ENCODE measurements at regions of chr11 and their contacts with region 1.

Region 1: DNA sequence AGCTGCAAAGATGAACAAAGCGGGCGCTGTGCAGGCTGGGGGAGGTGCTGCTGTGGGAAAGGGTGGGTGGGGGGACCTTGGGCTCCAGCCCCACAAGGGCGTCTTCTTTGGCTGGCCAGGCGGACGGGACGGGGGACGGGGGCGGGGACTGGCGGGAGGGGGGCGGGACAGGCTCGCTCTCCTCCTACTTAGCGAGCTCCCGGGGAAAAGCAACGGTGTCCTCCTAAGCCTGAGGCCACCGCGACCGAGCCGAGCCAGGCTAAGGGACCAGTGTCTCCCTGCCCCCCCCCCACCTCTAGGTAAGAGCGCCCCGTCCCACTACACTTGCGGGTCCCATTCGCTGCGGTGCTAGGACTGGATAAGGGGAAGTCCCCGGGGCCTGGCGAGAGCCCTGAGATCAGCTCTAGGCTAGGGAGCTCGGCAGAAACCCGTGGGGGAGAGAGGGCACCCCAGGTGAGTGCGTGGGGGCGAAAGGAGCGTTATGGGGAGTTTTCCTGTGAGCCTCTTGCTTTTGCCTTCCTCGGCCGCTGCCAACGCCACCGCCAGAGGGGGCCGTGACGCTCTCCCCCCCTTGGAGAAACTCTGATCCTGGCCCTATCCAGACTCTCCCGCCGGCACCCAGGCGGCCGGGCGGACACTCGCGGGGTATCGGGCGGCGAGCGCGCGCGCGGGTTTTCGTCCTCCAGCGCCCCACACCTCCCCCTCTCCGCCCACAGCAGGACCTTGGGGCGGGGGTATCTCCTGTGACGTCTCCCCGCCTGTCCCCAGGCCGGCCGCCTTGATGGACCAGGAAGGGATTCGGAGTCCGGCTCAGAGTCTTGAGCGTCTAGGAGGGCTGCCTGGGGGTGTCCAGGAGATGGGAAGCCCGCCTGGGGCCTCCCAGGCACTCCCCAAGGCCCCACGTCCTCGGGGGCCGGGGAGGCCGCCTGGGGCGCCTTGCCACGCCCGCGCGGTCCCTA is at the start of gene PHLDB1:
- DNase-seq: peak; percentile 81 to 86 (median 83)
- ATAC-seq: peak; percentile 12 to 54 (median 49)
- H3K4me3 ChIP-seq: peak within 1 kb of the TSS; percentile 63 to 99 (median 82)
- H3K27ac ChIP-seq: peak within 1 kb of the TSS; percentile 86 to 100 (median 95)
- H3K4me1 ChIP-seq: peaks cover 0 to 76% (median 45%) of the 10 kb centered on the region in 12 donors
- H3K27me3 ChIP-seq: peaks cover 0 to 18% (median 0%) of the 10 kb centered on the region in 9 donors
- CTCF ChIP-seq: peak; percentile 37 to 67 (median 52)
- POLR2A ChIP-seq: peak in 1 of 2 donors; percentile 68
- total RNA-seq, gene PHLDB1: 86.0 to 124 (median 113) TPM

Region 2: DNA sequence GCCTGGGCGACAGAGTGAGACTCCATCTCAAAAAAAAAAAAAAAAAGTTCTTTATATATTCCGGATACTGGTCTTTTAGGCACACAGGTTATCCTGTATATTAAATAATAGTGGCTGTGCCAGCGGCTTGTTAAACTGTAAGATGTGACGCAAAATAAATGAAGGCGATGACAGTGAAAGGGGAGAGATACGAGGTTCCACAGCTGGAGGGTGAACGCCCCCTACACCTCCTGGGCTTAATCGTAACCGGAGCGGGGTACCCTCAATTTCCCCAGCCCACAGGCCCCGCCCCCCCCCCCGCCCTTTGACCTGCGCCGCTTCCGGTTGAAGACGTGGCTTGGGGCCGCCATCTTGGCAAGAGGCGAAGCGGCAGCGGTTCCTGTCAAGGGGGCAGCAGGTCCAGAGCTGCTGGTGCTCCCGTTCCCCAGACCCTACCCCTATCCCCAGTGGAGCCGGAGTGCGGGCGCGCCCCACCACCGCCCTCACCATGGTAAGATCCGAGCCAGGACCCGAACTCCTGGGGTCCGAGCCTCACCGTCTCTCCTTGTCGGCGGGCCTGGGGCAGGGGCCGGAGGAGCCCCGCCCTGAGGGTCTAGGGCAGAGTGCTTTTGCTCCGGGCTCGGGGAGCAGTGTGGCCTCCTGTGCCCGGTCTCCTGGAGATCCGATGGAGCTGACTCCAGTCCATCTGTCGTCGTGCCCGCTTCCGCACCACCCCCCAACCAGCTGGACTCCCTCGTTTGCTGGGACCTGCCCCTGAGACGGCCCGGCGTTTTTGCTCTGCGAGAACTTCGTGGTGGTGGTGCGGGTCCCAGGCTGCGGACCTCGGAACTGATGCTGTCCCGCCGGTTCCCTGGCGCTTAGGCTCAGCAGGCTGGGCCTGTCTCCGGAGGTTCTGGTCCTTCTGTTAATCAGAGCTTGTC is 35.4 kb before region 1 on chr11 and contains the start of gene ARCN1:
- intact Hi-C with region 1: loop called in 3 of 10 experiments (anchors 2 to 5 kb)
- DNase-seq: peak; percentile 83 to 90 (median 86)
- ATAC-seq: peak; percentile 80 to 91 (median 86)
- H3K4me3 ChIP-seq: peak within 1 kb of the TSS; percentile 55 to 100 (median 93)
- H3K27ac ChIP-seq: peak within 1 kb of the TSS; percentile 90 to 99 (median 98)
- H3K4me1 ChIP-seq: peaks cover 0 to 50% (median 37%) of the 10 kb centered on the region in 12 donors
- H3K27me3 ChIP-seq: no peaks in the 10 kb centered on the region
- CTCF ChIP-seq: peak in 1 of 12 donors; percentile 6
- POLR2A ChIP-seq: peak in 1 of 2 donors; percentile 58
- total RNA-seq, gene ARCN1: 87.6 to 127 (median 99.6) TPM

Region 3: GRCh38 chr11:118592616-118593367 is 14.9 kb before region 1 on chr11:
- intact Hi-C with region 1: loop called in 1 of 10 experiments (anchors 2 kb)
- DNase-seq: peak in 1 of 5 donors; percentile 71
- ATAC-seq: peak; percentile 72 to 87 (median 82)
- H3K4me3 ChIP-seq: no peak overlapping the region
- H3K27ac ChIP-seq: peak overlapping the region; percentile 7 to 82 (median 75)
- H3K4me1 ChIP-seq: peaks cover 0 to 45% (median 21%) of the 10 kb centered on the region in 12 donors
- H3K27me3 ChIP-seq: no peaks in the 10 kb centered on the region
- CTCF ChIP-seq: no peak
- POLR2A ChIP-seq: no peak

Region 4: DNA sequence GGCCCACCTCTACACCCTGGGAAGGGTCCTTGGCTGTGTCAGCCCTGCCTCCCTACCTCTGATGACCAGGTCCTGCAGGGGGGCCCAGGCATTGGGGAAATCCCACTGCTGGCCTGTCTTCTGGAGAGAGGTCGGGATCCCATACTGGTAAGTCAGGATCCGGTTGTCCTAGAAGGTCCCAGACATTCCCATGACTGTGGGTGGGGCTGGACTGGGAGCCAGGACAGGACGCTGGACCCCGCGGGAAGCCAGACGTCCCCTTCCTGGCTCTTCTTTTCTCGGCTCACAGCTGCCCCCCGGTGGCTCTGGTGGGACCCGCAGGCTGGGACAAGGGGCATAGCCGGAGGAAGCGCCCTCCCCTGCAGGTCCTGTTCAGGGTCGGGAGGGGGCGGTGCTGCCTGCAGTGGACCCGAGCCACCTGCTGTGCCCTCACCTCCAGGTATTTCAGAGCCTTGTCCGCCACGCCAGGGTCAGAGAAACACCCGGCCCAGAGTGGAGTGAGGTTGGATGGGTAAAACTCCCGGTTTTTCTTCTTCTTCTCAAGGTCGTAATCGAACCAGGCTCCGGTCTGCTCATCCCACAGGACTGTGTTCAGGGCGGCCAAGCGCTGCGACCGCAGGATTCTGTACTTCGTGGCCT is 51.8 kb after region 1 on chr11:
- intact Hi-C with region 1: loop called in 7 of 10 experiments (anchors 1 to 10 kb)
- DNase-seq: peak; percentile 91 to 94 (median 93)
- ATAC-seq: peak; percentile 73 to 84 (median 78)
- H3K4me3 ChIP-seq: peak overlapping the region in 1 of 12 donors; percentile 7
- H3K27ac ChIP-seq: peak overlapping the region in 11 of 12 donors; percentile 1 to 70 (median 40)
- H3K4me1 ChIP-seq: peaks cover 0 to 26% (median 14%) of the 10 kb centered on the region in 12 donors
- H3K27me3 ChIP-seq: no peaks in the 10 kb centered on the region
- CTCF ChIP-seq: peak; percentile 95 to 100 (median 98)
- POLR2A ChIP-seq: no peak

Measured in heart left ventricle (tissue), 16 donors.